Esophagus muscularis mucosa (tissue), 4 donors: ENCODE measurements at regions of chr15 and their contacts with region 1.

Region 1: DNA sequence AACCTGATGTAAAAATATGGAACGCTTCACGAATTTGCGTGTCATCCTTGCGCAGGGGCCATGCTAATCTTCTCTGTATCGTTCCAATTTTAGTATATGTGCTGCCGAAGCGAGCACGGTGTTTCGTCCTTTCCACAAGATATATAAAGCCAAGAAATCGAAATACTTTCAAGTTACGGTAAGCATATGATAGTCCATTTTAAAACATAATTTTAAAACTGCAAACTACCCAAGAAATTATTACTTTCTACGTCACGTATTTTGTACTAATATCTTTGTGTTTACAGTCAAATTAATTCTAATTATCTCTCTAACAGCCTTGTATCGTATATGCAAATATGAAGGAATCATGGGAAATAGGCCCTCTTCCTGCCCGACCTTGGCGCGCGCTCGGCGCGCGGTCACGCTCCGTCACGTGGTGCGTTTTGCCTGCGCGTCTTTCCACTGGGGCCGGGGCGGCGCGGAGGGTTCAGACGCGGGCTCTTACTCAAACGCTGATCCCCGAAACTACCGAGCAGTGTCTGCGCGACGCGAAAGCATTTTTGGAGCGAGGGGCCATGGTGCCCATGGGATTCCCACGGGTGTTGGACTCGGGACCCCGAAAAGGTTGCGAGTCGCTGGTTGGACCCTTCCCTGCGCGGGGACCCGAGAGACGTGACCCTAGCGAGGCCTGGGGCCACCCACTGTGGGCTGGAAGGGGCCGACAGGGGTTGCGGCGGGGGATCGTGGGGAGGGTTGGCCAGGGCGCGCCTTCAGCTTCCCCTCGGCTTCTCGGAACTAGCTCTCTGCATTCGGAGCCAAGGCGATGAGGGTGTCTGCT is at the start of gene RNU6-1:
- DNase-seq: peak; percentile 98
- H3K4me3 ChIP-seq: peak within 1 kb of the TSS; percentile 75 to 92 (median 83)
- H3K27ac ChIP-seq: peak within 1 kb of the TSS; percentile 95 to 99 (median 97)
- H3K4me1 ChIP-seq: peaks cover 26 to 50% (median 46%) of the 10 kb centered on the region in 4 donors
- H3K27me3 ChIP-seq: peaks cover 0 to 11% (median 11%) of the 10 kb centered on the region in 4 donors
- CTCF ChIP-seq: no peak
- EP300 ChIP-seq: no peak
- POLR2A ChIP-seq: peak; percentile 63
- total RNA-seq, gene RNU6-1: not detected

Region 2: DNA sequence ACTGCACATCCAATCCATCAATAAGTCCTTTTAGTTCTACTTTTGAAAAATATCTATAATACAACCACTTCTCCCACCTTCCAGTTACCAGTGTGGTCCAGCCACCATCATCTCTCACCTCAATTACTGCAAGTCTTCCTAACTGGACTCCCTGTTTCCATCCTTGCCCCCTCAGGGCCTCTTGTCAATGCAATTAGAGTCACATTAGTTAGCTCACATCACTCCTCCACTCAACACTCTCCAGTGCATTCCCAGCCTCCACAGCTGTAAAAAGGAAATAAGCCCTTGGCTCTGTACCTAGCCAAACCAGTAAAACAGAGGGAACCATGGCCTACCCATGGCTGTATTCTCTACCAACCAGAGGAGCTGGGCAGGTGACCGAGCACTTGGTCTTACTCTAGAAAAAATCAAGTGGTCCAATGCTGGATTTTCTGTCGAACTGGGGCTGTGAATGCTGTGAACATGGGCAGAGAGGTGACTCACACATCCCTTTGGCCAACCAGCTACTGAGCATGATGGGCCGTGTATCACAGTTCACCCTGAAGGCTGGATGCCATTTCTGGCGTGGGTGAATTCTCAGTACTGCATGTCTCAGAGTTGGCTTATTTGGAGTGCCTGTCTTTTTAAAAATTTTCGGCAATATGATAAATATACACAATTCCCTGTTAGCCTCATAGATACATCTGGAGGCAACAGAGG is 381.7 kb before region 1 on chr15:
- intact Hi-C with region 1: loop called (anchors 2 kb)
- DNase-seq: no peak
- H3K4me3 ChIP-seq: no peak overlapping the region
- H3K27ac ChIP-seq: no peak overlapping the region
- H3K4me1 ChIP-seq: no peaks in the 10 kb centered on the region
- H3K27me3 ChIP-seq: no peaks in the 10 kb centered on the region
- CTCF ChIP-seq: no peak
- EP300 ChIP-seq: no peak
- POLR2A ChIP-seq: no peak